MCF 10A (cell line): ENCODE measurements at regions of chr6 and their contacts with region 1.

Region 1: GRCh38 chr6:30541515-30542403 is 14.5 kb downstream of the GNL1 start:
- DNase-seq: peak; percentile 74
- H3K4me3 Mint-ChIP-seq: peak overlapping the region; percentile 15
- H3K27ac Mint-ChIP-seq: no peak overlapping the region
- H3K4me1 Mint-ChIP-seq: peaks cover 12% of the 10 kb centered on the region
- H3K27me3 Mint-ChIP-seq: no peaks in the 10 kb centered on the region
- CTCF ChIP-seq: peak; percentile 92

Region 2: GRCh38 chr6:29752451-29753308 is 789.1 kb before region 1 on chr6:
- CTCF ChIA-PET with region 1: no interaction called
- POLR2A ChIA-PET with region 1: no interaction called
- intact Hi-C with region 1: no loop called
- DNase-seq: peak; percentile 92
- H3K4me3 Mint-ChIP-seq: peak overlapping the region; percentile 89
- H3K27ac Mint-ChIP-seq: peak overlapping the region; percentile 85
- H3K4me1 Mint-ChIP-seq: peaks cover 32% of the 10 kb centered on the region
- H3K27me3 Mint-ChIP-seq: no peaks in the 10 kb centered on the region
- CTCF ChIP-seq: peak; percentile 94

Region 3: GRCh38 chr6:30489081-30490025 is 52.4 kb before region 1 on chr6 and contains the start of gene HLA-E:
- CTCF ChIA-PET with region 1: interaction called, 229 read pairs
- POLR2A ChIA-PET with region 1: interaction called, 12 read pairs
- intact Hi-C with region 1: no loop called
- DNase-seq: peak; percentile 100
- H3K4me3 Mint-ChIP-seq: peak within 1 kb of the TSS; percentile 88
- H3K27ac Mint-ChIP-seq: peak within 1 kb of the TSS; percentile 97
- H3K4me1 Mint-ChIP-seq: peaks cover 4% of the 10 kb centered on the region
- H3K27me3 Mint-ChIP-seq: no peaks in the 10 kb centered on the region
- CTCF ChIP-seq: no peak
- total RNA-seq, gene HLA-E: 83.6 and 103 TPM in 2 replicates

Region 4: GRCh38 chr6:30497714-30498113 is 44.0 kb before region 1 on chr6:
- CTCF ChIA-PET with region 1: interaction called, 8 read pairs
- POLR2A ChIA-PET with region 1: interaction called, 3 read pairs
- intact Hi-C with region 1: loop called (anchors 1 kb)
- DNase-seq: no peak
- H3K4me3 Mint-ChIP-seq: no peak overlapping the region
- H3K27ac Mint-ChIP-seq: no peak overlapping the region
- H3K4me1 Mint-ChIP-seq: peaks cover 8% of the 10 kb centered on the region
- H3K27me3 Mint-ChIP-seq: no peaks in the 10 kb centered on the region
- CTCF ChIP-seq: no peak

Region 5: GRCh38 chr6:30556066-30556905 is 14.5 kb after region 1 on chr6 and contains the start of gene GNL1:
- CTCF ChIA-PET with region 1: interaction called, 116 read pairs
- POLR2A ChIA-PET with region 1: interaction called, 34 read pairs
- intact Hi-C with region 1: no loop called
- DNase-seq: peak; percentile 94
- H3K4me3 Mint-ChIP-seq: peak within 1 kb of the TSS; percentile 91
- H3K27ac Mint-ChIP-seq: peak within 1 kb of the TSS; percentile 99
- H3K4me1 Mint-ChIP-seq: peaks cover 16% of the 10 kb centered on the region
- H3K27me3 Mint-ChIP-seq: no peaks in the 10 kb centered on the region
- CTCF ChIP-seq: no peak
- total RNA-seq, gene GNL1: 69.1 and 76.8 TPM in 2 replicates

Region 6: DNA sequence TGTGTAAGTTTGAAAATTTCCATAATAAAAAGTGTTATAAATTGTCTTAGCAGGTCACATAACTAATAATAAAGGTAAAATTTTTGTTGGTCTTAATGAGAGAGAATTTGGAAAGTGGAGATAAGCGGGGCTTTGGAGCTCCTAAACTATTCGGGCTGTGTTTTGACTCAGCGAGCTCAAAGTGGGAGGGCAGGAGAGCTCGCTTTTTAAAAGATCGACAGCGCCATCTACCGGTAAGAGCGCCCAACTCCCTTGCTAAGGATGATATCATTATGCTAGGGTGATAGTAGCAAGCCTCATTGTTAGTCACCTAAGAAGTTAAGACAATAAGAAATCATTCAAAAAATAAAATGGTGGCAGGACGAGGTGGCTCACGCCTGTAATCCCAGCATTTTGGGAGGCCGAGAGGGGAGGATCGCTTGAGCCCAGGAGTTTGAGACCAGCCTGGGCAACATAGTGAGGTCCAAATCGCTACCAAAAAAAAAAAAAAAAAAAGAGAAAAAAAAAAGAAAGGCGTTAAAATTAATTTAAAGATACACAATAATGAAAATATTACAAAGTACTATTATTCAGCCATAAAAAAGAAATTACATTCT is 545.8 kb after region 1 on chr6:
- CTCF ChIA-PET with region 1: interaction called, 10 read pairs
- POLR2A ChIA-PET with region 1: interaction called, 4 read pairs
- intact Hi-C with region 1: no loop called
- DNase-seq: peak; percentile 91
- H3K4me3 Mint-ChIP-seq: no peak overlapping the region
- H3K27ac Mint-ChIP-seq: peak overlapping the region; percentile 16
- H3K4me1 Mint-ChIP-seq: peaks cover 21% of the 10 kb centered on the region
- H3K27me3 Mint-ChIP-seq: no peaks in the 10 kb centered on the region
- CTCF ChIP-seq: peak; percentile 65